Keratinocyte (primary cell): ENCODE measurements at regions of chr11 and their contacts with region 1.

Region 1: GRCh38 chr11:62889484-62890437 is 9.1 kb downstream of the SLC3A2 start:
- DNase-seq: no peak
- H3K4me3 ChIP-seq: no peak overlapping the region
- H3K27ac ChIP-seq: no peak overlapping the region
- H3K4me1 ChIP-seq: peaks cover 11% of the 10 kb centered on the region
- H3K27me3 ChIP-seq: no peaks in the 10 kb centered on the region
- CTCF ChIP-seq: no peak

Region 2: DNA sequence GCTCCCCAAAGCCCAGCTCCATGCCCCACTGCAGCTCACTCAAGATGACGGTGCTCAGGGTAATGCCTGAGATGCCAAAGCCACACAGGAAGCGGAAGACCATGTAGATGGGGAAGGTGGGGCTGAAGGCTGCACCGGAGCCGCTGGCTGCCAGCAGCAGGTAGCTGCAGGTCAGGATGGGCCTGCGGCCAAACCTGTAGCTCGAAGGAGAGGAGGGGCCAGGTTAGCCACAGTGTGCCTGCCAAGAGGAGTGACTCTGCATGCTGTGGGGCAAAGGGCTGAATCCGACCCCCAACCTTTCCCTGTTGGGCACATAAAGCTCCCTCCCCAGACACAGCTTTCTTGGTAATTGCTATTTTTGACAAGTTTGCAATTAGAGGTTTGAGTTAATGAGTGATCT is 109.9 kb after region 1 on chr11:
- dilution Hi-C with region 1: loop called (anchors 10 kb)
- DNase-seq: no peak
- H3K4me3 ChIP-seq: no peak overlapping the region
- H3K27ac ChIP-seq: no peak overlapping the region
- H3K4me1 ChIP-seq: peaks cover 8% of the 10 kb centered on the region
- H3K27me3 ChIP-seq: no peaks in the 10 kb centered on the region
- CTCF ChIP-seq: no peak